Activated T-helper 2 cell treated with anti-CD3 and anti-CD28 coated beads, Interferon-gamma antibody, Interleukin-2, Interleukin-4, amounts not matched to agents 10 μg/mL and 5 μg/mL and 100 μg/mL, durations not matched to agents 14 hours and 24 hours and 36 hours (primary cell): ENCODE measurements at regions of chr2 and their contacts with region 1.

Region 1: GRCh38 chr2:203814661-203815540 is 52.7 kb upstream of the CTLA4 start:
- DNase-seq: peak; percentile 33
- H3K4me3 Mint-ChIP-seq: peak overlapping the region; percentile 41
- H3K27ac Mint-ChIP-seq: peak overlapping the region; percentile 59
- H3K4me1 Mint-ChIP-seq: peaks cover 56% of the 10 kb centered on the region
- H3K27me3 Mint-ChIP-seq: no peaks in the 10 kb centered on the region

Region 2: GRCh38 chr2:203484266-203485112 is 330.4 kb before region 1 on chr2:
- intact Hi-C with region 1: loop called (anchors 1 kb)
- DNase-seq: peak; percentile 33
- H3K4me3 Mint-ChIP-seq: no peak overlapping the region
- H3K27ac Mint-ChIP-seq: no peak overlapping the region
- H3K4me1 Mint-ChIP-seq: peaks cover 6% of the 10 kb centered on the region
- H3K27me3 Mint-ChIP-seq: no peaks in the 10 kb centered on the region

Region 3: GRCh38 chr2:203578759-203579643 is 235.9 kb before region 1 on chr2:
- intact Hi-C with region 1: loop called (anchors 1 kb)
- DNase-seq: peak; percentile 54
- H3K4me3 Mint-ChIP-seq: no peak overlapping the region
- H3K27ac Mint-ChIP-seq: peak overlapping the region; percentile 67
- H3K4me1 Mint-ChIP-seq: peaks cover 38% of the 10 kb centered on the region
- H3K27me3 Mint-ChIP-seq: peaks cover 41% of the 10 kb centered on the region

Region 4: DNA sequence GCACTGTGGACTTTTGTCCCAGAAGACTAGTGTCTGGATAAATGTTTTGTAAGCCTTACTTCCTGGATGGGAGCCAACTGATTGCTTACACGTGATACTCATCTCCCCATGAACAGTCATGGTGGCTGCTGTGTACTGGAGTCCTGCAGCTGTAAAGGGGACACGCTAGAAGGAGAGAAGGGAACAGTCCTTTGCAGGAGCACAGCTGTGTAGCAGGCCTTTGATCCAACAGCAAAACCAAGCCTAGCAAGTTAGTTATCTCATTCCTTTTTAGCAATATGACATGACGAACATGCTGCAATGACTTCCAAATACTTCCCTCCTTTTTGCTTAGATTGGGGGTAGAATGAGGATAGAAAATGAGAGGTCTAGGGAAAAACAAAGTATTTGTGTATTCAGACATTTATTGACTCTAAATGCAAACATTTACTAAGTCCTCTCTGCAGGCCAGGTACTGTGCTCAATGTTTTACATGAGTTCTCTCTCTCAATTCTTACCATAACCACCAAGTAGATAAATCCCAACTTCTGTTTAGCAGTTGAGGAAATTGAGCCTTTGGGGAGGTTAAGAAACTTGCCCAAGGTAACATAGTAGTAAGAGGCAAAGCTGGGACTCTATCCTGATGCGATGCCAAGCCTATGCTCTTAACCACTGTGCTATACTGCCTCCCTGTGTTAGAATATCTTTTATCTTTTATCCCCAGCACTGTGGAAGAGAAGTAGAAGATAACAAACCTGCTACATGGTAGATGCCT is 163.9 kb before region 1 on chr2:
- intact Hi-C with region 1: loop called (anchors 5 kb)
- DNase-seq: no peak
- H3K4me3 Mint-ChIP-seq: no peak overlapping the region
- H3K27ac Mint-ChIP-seq: no peak overlapping the region
- H3K4me1 Mint-ChIP-seq: peaks cover 29% of the 10 kb centered on the region
- H3K27me3 Mint-ChIP-seq: peaks cover 5% of the 10 kb centered on the region

Region 5: GRCh38 chr2:203759690-203760365 is 55.1 kb before region 1 on chr2:
- intact Hi-C with region 1: no loop called
- DNase-seq: no peak
- H3K4me3 Mint-ChIP-seq: no peak overlapping the region
- H3K27ac Mint-ChIP-seq: no peak overlapping the region
- H3K4me1 Mint-ChIP-seq: peaks cover 41% of the 10 kb centered on the region
- H3K27me3 Mint-ChIP-seq: no peaks in the 10 kb centered on the region

Region 6: GRCh38 chr2:203782262-203782976 is 32.5 kb before region 1 on chr2:
- intact Hi-C with region 1: loop called (anchors 2 kb)
- DNase-seq: peak; percentile 53
- H3K4me3 Mint-ChIP-seq: no peak overlapping the region
- H3K27ac Mint-ChIP-seq: peak overlapping the region; percentile 74
- H3K4me1 Mint-ChIP-seq: peaks cover 42% of the 10 kb centered on the region
- H3K27me3 Mint-ChIP-seq: no peaks in the 10 kb centered on the region

Region 7: DNA sequence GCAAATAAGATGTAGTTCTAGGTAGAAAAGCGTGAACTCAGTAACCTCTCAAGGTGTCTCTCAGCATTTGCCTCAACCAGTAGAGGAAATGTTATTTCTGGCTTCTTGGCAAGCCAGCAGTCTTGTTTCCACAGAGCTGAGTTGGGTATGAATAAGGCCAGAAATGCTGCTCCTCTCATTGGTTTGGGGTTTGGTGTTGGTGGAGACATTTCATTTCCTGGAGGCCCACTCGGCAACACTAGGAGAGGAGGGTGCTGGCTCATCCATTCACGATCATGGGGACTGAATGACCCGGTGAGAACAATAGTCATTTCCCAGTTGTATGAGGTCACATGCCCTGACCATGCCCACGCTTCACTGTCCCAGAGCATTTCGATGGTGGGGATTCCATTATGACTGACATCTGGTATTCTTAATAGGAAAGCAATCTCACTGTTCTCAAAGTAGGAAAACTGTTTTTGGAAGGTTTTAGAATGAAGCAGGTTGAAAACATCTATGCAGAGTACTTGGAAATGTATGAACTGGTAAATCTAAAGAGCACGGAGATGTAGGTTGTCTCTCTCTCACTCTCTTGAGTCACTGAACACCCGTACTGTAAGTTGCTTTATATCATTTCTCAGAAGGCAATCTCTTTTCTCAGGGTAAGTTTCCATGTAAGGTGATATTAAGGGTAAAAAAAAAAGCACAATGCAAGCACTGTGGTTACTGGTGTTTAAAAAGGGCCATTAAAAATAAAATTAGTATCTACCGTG is 15.6 kb after region 1 on chr2:
- intact Hi-C with region 1: loop called (anchors 1 kb)
- DNase-seq: peak; percentile 36
- H3K4me3 Mint-ChIP-seq: peak overlapping the region; percentile 57
- H3K27ac Mint-ChIP-seq: peak overlapping the region; percentile 95
- H3K4me1 Mint-ChIP-seq: peaks cover 26% of the 10 kb centered on the region
- H3K27me3 Mint-ChIP-seq: no peaks in the 10 kb centered on the region

Region 8: DNA sequence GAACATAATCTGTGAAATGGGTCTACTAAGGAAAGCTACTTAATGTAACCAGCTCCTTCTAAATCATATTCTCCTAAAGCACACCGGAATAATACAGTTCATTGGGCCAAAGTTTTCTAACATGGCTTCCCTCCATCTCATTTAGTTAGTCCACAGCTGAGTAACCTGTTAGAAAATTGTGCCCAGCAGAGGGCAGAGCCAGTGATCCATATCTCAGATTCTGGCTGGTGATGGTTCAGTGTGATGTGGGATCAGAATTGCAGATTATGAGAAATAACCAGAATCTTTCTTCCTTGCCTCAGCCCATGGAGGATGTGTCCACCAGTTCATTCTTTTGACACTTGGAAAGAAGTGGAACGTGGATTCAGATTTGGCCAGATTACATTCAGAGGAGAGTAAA is 43.3 kb after region 1 on chr2:
- intact Hi-C with region 1: no loop called
- DNase-seq: no peak
- H3K4me3 Mint-ChIP-seq: no peak overlapping the region
- H3K27ac Mint-ChIP-seq: peak overlapping the region; percentile 67
- H3K4me1 Mint-ChIP-seq: peaks cover 83% of the 10 kb centered on the region
- H3K27me3 Mint-ChIP-seq: no peaks in the 10 kb centered on the region

Region 9: GRCh38 chr2:203909261-203909967 is 94.5 kb after region 1 on chr2:
- intact Hi-C with region 1: loop called (anchors 1 kb)
- DNase-seq: no peak
- H3K4me3 Mint-ChIP-seq: no peak overlapping the region
- H3K27ac Mint-ChIP-seq: peak overlapping the region; percentile 35
- H3K4me1 Mint-ChIP-seq: peaks cover 21% of the 10 kb centered on the region
- H3K27me3 Mint-ChIP-seq: peaks cover 2% of the 10 kb centered on the region